ENCODE measurements at regions of chr9 and their contacts with region 1.

Region 1: DNA sequence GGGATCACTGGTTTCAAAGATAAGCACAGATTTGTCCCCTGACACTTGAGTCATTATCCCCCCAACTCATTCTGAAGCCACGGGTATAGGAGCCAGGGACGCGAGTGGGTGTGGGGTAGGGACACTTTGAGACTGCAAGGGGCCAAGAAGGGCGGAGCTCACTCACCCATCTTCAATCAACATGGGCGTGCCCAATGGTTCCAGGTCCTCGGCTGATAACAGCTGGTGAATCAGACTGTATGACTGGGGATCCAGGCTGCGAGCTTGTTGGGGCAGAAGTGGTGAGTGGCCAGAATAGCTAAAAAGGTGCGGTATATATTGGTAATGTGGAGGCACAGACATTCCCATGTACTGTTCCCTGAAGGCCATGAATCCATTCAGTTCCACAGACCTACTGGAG is 30.7 kb upstream of the NR5A1 start:
- DNase-seq: no peak
- H3K4me3 Mint-ChIP-seq: no peak overlapping the region
- H3K27ac Mint-ChIP-seq: no peak overlapping the region
- H3K4me1 Mint-ChIP-seq: no peaks in the 10 kb centered on the region
- H3K27me3 Mint-ChIP-seq: peaks cover 20% of the 10 kb centered on the region

Region 2: GRCh38 chr9:124088476-124088837 is 449.5 kb before region 1 on chr9:
- CTCF ChIA-PET with region 1: no interaction called
- POLR2A ChIA-PET with region 1: no interaction called
- DNase-seq: no peak
- H3K4me3 Mint-ChIP-seq: no peak overlapping the region
- H3K27ac Mint-ChIP-seq: no peak overlapping the region
- H3K4me1 Mint-ChIP-seq: no peaks in the 10 kb centered on the region
- H3K27me3 Mint-ChIP-seq: peaks cover 15% of the 10 kb centered on the region

Region 3: GRCh38 chr9:124420991-124421543 is 116.9 kb before region 1 on chr9:
- CTCF ChIA-PET with region 1: interaction called, 48 read pairs
- POLR2A ChIA-PET with region 1: no interaction called
- DNase-seq: no peak
- H3K4me3 Mint-ChIP-seq: no peak overlapping the region
- H3K27ac Mint-ChIP-seq: no peak overlapping the region
- H3K4me1 Mint-ChIP-seq: peaks cover 11% of the 10 kb centered on the region
- H3K27me3 Mint-ChIP-seq: peaks cover 8% of the 10 kb centered on the region

Region 4: GRCh38 chr9:124527781-124528180 is 10.1 kb before region 1 on chr9:
- CTCF ChIA-PET with region 1: interaction called, 12 read pairs
- POLR2A ChIA-PET with region 1: no interaction called
- DNase-seq: no peak
- H3K4me3 Mint-ChIP-seq: no peak overlapping the region
- H3K27ac Mint-ChIP-seq: no peak overlapping the region
- H3K4me1 Mint-ChIP-seq: no peaks in the 10 kb centered on the region
- H3K27me3 Mint-ChIP-seq: peaks cover 4% of the 10 kb centered on the region